CD4-positive, alpha-beta T cell (primary cell): ENCODE measurements at regions of chr10 and their contacts with region 1.

Region 1: GRCh38 chr10:80444646-80445319 is 9.3 kb upstream of the TSPAN14 start:
- DNase-seq: peak in 12 of 14 experiments; percentile 39 to 92 (median 67)
- ATAC-seq: peak; percentile 82
- H3K4me3 ChIP-seq: no peak overlapping the region
- H3K4me3 Mint-ChIP-seq: no peak overlapping the region
- H3K27ac ChIP-seq: no peak overlapping the region
- H3K27ac Mint-ChIP-seq: peak overlapping the region; percentile 84
- H3K4me1 ChIP-seq: peaks cover 23% of the 10 kb centered on the region
- H3K4me1 Mint-ChIP-seq: peaks cover 51% of the 10 kb centered on the region
- H3K27me3 ChIP-seq: no peaks in the 10 kb centered on the region
- H3K27me3 Mint-ChIP-seq: no peaks in the 10 kb centered on the region
- CTCF ChIP-seq: peak; percentile 65

Region 2: GRCh38 chr10:80389809-80390208 is 55.0 kb before region 1 on chr10:
- CTCF ChIA-PET with region 1: interaction called, 4 read pairs
- POLR2A ChIA-PET with region 1: no interaction called
- intact Hi-C with region 1: loop called in 1 of 2 experiments (anchors 5 kb)
- DNase-seq: no peak
- ATAC-seq: no peak
- H3K4me3 ChIP-seq: no peak overlapping the region
- H3K4me3 Mint-ChIP-seq: no peak overlapping the region
- H3K27ac ChIP-seq: no peak overlapping the region
- H3K27ac Mint-ChIP-seq: no peak overlapping the region
- H3K4me1 ChIP-seq: no peaks in the 10 kb centered on the region
- H3K4me1 Mint-ChIP-seq: no peaks in the 10 kb centered on the region
- H3K27me3 ChIP-seq: no peaks in the 10 kb centered on the region
- H3K27me3 Mint-ChIP-seq: no peaks in the 10 kb centered on the region
- CTCF ChIP-seq: no peak

Region 3: GRCh38 chr10:80472234-80473095 is 27.7 kb after region 1 on chr10:
- CTCF ChIA-PET with region 1: interaction called, 12 read pairs
- POLR2A ChIA-PET with region 1: interaction called, 176 read pairs
- intact Hi-C with region 1: no loop called
- DNase-seq: peak in 3 of 14 experiments; percentile 65 to 77 (median 75)
- ATAC-seq: peak; percentile 65
- H3K4me3 ChIP-seq: peak overlapping the region; percentile 23
- H3K4me3 Mint-ChIP-seq: peak overlapping the region; percentile 84
- H3K27ac ChIP-seq: peak overlapping the region; percentile 46 to 48
- H3K27ac Mint-ChIP-seq: peak overlapping the region; percentile 92
- H3K4me1 ChIP-seq: peaks cover 98% of the 10 kb centered on the region
- H3K4me1 Mint-ChIP-seq: peaks cover 93% of the 10 kb centered on the region
- H3K27me3 ChIP-seq: no peaks in the 10 kb centered on the region
- H3K27me3 Mint-ChIP-seq: no peaks in the 10 kb centered on the region
- CTCF ChIP-seq: no peak

Region 4: GRCh38 chr10:80498833-80499741 is 54.3 kb after region 1 on chr10:
- CTCF ChIA-PET with region 1: interaction called, 147 read pairs
- POLR2A ChIA-PET with region 1: interaction called, 36 read pairs
- intact Hi-C with region 1: no loop called
- DNase-seq: peak in 9 of 14 experiments; percentile 31 to 77 (median 49)
- ATAC-seq: peak; percentile 30
- H3K4me3 ChIP-seq: peak overlapping the region; percentile 10
- H3K4me3 Mint-ChIP-seq: peak overlapping the region; percentile 83
- H3K27ac ChIP-seq: peak overlapping the region; percentile 49 to 54
- H3K27ac Mint-ChIP-seq: peak overlapping the region; percentile 78
- H3K4me1 ChIP-seq: peaks cover 89% of the 10 kb centered on the region
- H3K4me1 Mint-ChIP-seq: peaks cover 100% of the 10 kb centered on the region
- H3K27me3 ChIP-seq: no peaks in the 10 kb centered on the region
- H3K27me3 Mint-ChIP-seq: no peaks in the 10 kb centered on the region
- CTCF ChIP-seq: no peak

Region 5: DNA sequence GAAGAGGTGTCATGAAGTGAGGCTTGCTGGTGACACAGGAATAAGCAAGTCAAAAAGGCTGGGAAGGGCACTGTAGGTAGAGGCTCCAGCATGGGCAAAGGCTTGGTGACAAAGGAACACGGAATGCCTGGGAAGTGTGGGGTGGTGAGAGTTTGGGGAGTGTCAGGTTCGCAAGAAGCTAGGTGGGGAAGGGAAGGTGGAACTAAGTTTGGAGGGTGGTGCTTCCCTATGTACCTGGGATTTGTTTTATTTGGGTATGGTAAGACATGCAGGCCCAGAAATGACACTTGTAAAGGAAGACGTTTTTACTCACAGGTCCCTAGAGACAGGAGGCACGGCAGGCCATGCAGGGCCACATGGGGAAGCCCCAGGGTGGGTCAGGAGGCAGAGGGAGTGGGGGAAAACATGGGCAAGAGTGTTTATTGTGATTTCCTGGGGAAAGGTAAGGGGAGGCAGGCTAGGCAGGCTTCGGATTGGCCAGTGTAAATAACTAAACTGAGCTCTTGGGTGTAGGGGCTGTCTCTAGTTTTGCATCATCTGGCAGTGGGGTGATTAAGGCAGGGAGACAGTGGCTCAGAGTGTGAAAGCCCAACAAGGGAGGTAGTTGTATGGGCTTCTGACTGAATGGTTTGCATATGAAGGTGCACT is 145.1 kb after region 1 on chr10:
- CTCF ChIA-PET with region 1: no interaction called
- POLR2A ChIA-PET with region 1: no interaction called
- intact Hi-C with region 1: loop called in 1 of 2 experiments (anchors 10 kb)
- DNase-seq: no peak
- ATAC-seq: no peak
- H3K4me3 ChIP-seq: no peak overlapping the region
- H3K4me3 Mint-ChIP-seq: no peak overlapping the region
- H3K27ac ChIP-seq: no peak overlapping the region
- H3K27ac Mint-ChIP-seq: no peak overlapping the region
- H3K4me1 ChIP-seq: no peaks in the 10 kb centered on the region
- H3K4me1 Mint-ChIP-seq: no peaks in the 10 kb centered on the region
- H3K27me3 ChIP-seq: no peaks in the 10 kb centered on the region
- H3K27me3 Mint-ChIP-seq: no peaks in the 10 kb centered on the region
- CTCF ChIP-seq: no peak